ENCODE measurements at regions of chr11 and their contacts with region 1.

Region 1: GRCh38 chr11:4636962-4637661 is at the start of gene OR51D1:
- DNase-seq: no peak
- H3K4me3 ChIP-seq: peak within 1 kb of the TSS; percentile 36
- CTCF ChIP-seq: peak; percentile 95

Region 2: DNA sequence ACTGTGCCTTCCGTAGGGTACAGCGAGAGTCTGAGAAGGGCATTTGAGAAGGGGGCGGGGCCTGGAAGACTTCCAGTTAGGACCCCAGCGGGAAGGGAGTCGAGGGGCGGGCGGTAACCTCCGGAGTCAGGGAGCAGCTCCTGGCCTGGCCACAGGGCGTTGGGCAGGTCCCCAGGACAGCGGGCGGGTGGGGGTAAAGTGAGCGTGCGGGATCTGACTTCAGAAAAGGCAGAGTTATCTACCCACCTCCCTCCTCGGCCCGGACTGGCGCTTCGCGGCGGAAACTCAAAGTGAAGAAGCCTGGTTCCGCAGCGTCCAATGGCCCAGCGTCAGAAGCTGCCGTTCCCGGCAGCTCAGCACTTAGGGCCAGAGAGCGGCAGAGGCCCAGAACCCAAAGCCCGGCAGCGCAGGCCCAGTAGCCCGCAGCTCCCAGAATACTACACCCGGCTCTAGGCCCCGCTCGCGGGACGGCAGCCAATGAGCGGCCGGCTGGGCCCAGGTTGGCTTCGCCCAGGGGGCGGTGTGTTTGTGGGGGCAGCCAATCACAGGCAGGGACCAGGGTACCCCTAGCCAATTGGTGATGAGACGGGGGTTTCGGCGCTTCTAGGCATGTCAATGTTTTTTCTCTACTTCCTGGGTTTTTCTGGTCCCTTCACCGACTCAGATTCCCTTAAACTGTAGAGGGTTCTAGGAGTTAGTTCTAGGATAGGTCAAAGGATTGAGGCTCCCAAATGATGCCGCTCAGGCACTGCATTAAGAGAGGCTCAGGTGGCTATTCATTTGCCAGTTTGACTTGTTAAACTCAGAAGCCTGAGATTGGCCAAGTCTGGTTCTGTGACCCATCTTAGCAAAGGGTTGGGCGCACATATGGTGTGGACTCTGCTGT is 29.1 kb before region 1 on chr11 and contains the start of gene TRIM68:
- CTCF ChIA-PET with region 1: interaction called, 20 read pairs
- POLR2A ChIA-PET with region 1: interaction called, 4 read pairs
- DNase-seq: peak; percentile 76
- H3K4me3 ChIP-seq: peak within 1 kb of the TSS; percentile 69
- CTCF ChIP-seq: no peak

Region 3: GRCh38 chr11:4647766-4648165 is 10.7 kb after region 1 on chr11:
- CTCF ChIA-PET with region 1: interaction called, 39 read pairs
- POLR2A ChIA-PET with region 1: no interaction called
- DNase-seq: no peak
- H3K4me3 ChIP-seq: no peak overlapping the region
- CTCF ChIP-seq: no peak

Region 4: GRCh38 chr11:4682623-4683419 is 45.7 kb after region 1 on chr11:
- CTCF ChIA-PET with region 1: interaction called, 18 read pairs
- POLR2A ChIA-PET with region 1: no interaction called
- DNase-seq: peak; percentile 21
- H3K4me3 ChIP-seq: no peak overlapping the region
- CTCF ChIP-seq: no peak

Region 5: GRCh38 chr11:4826425-4826824 is 189.3 kb after region 1 on chr11:
- CTCF ChIA-PET with region 1: interaction called, 58 read pairs
- POLR2A ChIA-PET with region 1: no interaction called
- DNase-seq: peak; percentile 24
- H3K4me3 ChIP-seq: no peak overlapping the region
- CTCF ChIP-seq: peak; percentile 19

Region 6: GRCh38 chr11:5004424-5005274 is 367.5 kb after region 1 on chr11:
- CTCF ChIA-PET with region 1: interaction called, 35 read pairs
- POLR2A ChIA-PET with region 1: no interaction called
- DNase-seq: peak; percentile 5
- H3K4me3 ChIP-seq: no peak overlapping the region
- CTCF ChIP-seq: peak; percentile 55

Region 7: DNA sequence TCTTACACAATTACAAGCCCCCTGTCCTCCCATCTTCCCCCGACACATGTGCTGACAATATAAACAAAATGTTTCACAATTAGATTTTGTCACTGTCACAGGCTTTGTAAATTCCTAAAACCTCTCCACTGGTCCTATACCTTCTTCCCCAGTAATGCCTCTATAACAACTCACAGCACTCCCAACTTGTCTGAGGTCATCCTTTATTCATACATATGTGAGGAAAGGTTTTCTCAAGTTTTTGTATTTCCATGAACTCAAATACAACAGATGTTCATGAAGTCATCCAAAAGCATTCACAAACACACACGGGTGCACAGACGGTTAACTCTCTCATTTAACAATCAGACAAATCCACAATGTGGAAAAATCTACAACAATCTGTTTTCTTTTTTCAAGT is 909.3 kb after region 1 on chr11:
- CTCF ChIA-PET with region 1: no interaction called
- POLR2A ChIA-PET with region 1: no interaction called
- DNase-seq: no peak
- H3K4me3 ChIP-seq: no peak overlapping the region
- CTCF ChIP-seq: no peak